PC-9 (cell line): ENCODE measurements at regions of chr1 and their contacts with region 1.

Region 1: DNA sequence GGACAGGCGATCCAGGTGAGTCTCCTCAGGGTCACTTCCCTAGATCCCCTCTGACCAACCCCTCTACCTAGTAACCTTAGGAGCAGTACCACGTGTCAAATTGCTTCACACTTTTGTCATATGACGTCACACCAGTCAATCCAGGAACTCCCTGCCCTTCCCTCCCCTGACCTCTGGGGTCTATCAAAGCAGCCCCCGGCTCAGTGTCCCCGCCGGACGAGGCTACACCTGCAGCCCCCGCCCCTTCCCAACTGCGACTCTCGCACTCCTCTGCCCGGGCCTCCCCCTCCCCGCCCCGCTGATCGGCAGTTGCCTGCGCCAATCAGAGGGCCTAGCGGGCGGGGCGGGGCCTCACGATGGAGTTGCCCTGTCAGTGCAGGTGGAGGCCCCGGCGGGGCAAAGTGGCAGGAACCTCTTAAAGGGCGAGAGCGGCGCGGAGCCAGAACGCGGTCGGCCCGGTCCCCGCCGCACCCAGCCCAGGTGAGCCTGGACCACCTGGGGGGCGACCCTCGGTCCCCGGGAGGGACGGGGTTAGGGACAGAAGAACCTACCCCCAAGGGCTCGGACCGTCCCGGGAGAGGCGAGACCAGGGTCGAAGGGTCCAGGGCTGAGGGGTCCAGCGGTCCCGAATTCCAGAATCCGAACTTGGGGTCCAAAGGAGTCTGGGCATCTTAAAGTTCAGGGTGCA is 27.5 kb upstream of the EPB41 start:
- DNase-seq: peak; percentile 71 to 89
- H3K4me3 ChIP-seq: peak overlapping the region; percentile 75
- H3K27ac ChIP-seq: no peak overlapping the region; the same call in 1 of the 2 replicates
- H3K4me1 ChIP-seq: peaks cover 23% of the 10 kb centered on the region
- H3K27me3 ChIP-seq: no peaks in the 10 kb centered on the region
- CTCF ChIP-seq: no peak

Region 2: GRCh38 chr1:28648474-28649198 is 238.2 kb before region 1 on chr1 and contains the start of gene RNU11:
- CTCF ChIA-PET with region 1: no interaction called
- POLR2A ChIA-PET with region 1: interaction called, 12 read pairs
- intact Hi-C with region 1: no loop called
- DNase-seq: peak; percentile 85 to 95
- H3K4me3 ChIP-seq: peak within 1 kb of the TSS; percentile 52; the same call in 1 of the 2 replicates
- H3K27ac ChIP-seq: peak within 1 kb of the TSS; percentile 96
- H3K4me1 ChIP-seq: peaks cover 24% of the 10 kb centered on the region
- H3K27me3 ChIP-seq: no peaks in the 10 kb centered on the region
- CTCF ChIP-seq: no peak
- total RNA-seq, gene RNU11: not detected in 2 replicates

Region 3: DNA sequence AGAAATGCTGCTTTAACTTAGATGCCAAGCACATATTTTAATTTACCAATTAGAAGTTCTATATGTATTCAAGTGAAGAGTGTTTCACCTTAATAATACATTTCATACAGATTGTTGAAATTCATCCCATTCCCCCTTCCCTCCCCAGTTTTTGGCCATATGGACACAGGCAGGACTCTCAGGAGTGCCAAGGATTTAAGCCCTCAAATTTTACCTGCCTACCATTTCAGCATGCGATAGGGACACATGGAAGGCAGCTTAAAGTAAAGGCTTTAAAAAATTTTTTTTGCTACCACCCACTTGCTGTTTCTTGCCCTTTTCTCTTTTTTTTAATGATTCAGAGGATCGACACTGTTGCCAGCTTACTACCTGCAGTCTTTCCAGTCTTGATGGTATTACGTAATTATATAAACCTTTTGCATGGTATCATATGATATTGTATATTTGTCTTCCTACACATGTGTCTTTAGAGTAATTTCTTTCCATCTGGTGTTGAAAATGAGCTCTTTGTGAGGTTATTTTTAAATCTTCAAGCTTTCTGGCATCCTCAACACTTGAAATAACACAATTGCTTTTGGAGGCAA is 34.5 kb after region 1 on chr1:
- CTCF ChIA-PET with region 1: no interaction called
- POLR2A ChIA-PET with region 1: no interaction called
- intact Hi-C with region 1: no loop called
- DNase-seq: no peak
- H3K4me3 ChIP-seq: no peak overlapping the region
- H3K27ac ChIP-seq: no peak overlapping the region
- H3K4me1 ChIP-seq: peaks cover under 1% of the 10 kb centered on the region; the same call in 1 of the 2 replicates
- H3K27me3 ChIP-seq: no peaks in the 10 kb centered on the region
- CTCF ChIP-seq: no peak

Region 4: GRCh38 chr1:28971980-28972771 is 85.3 kb after region 1 on chr1:
- CTCF ChIA-PET with region 1: no interaction called
- POLR2A ChIA-PET with region 1: no interaction called
- intact Hi-C with region 1: loop called (anchors 1 kb)
- DNase-seq: peak; percentile 61 to 85
- H3K4me3 ChIP-seq: no peak overlapping the region
- H3K27ac ChIP-seq: peak overlapping the region; percentile 85
- H3K4me1 ChIP-seq: peaks cover 33% of the 10 kb centered on the region
- H3K27me3 ChIP-seq: no peaks in the 10 kb centered on the region
- CTCF ChIP-seq: no peak

Region 5: GRCh38 chr1:29145739-29146437 is 259.0 kb after region 1 on chr1:
- CTCF ChIA-PET with region 1: no interaction called
- POLR2A ChIA-PET with region 1: no interaction called
- intact Hi-C with region 1: loop called (anchors 10 kb)
- DNase-seq: peak; percentile 45 to 65
- H3K4me3 ChIP-seq: no peak overlapping the region
- H3K27ac ChIP-seq: peak overlapping the region; percentile 61
- H3K4me1 ChIP-seq: peaks cover 8% of the 10 kb centered on the region
- H3K27me3 ChIP-seq: no peaks in the 10 kb centered on the region
- CTCF ChIP-seq: no peak

Region 6: GRCh38 chr1:30707412-30708360 is 1820.8 kb after region 1 on chr1:
- CTCF ChIA-PET with region 1: interaction called, 4 read pairs
- POLR2A ChIA-PET with region 1: no interaction called
- intact Hi-C with region 1: loop called (anchors 2 kb)
- DNase-seq: peak in 1 of 2 experiments; percentile 75
- H3K4me3 ChIP-seq: no peak overlapping the region
- H3K27ac ChIP-seq: no peak overlapping the region
- H3K4me1 ChIP-seq: no peaks in the 10 kb centered on the region
- H3K27me3 ChIP-seq: no peaks in the 10 kb centered on the region
- CTCF ChIP-seq: peak; percentile 85